ENCODE measurements at regions of chr5 and their contacts with region 1.

Region 1: GRCh38 chr5:127030259-127031146 is at the start of gene MARCHF3:
- DNase-seq: peak; percentile 91 to 98 (median 94)
- ATAC-seq: peak; percentile 98
- H3K4me3 ChIP-seq: peak within 1 kb of the TSS; percentile 79
- H3K4me3 Mint-ChIP-seq: peak within 1 kb of the TSS; percentile 83 to 96 (median 92)
- H3K27ac ChIP-seq: peak within 1 kb of the TSS; percentile 78
- H3K27ac Mint-ChIP-seq: peak within 1 kb of the TSS; percentile 42 to 93 (median 82)
- H3K4me1 ChIP-seq: peaks cover 0 to 10% of the 10 kb centered on the region in 2 donors
- H3K4me1 Mint-ChIP-seq: peaks cover 17 to 38% (median 28%) of the 10 kb centered on the region in 7 donors
- H3K27me3 ChIP-seq: no peaks in the 10 kb centered on the region
- H3K27me3 Mint-ChIP-seq: peaks cover 0 to 56% (median 0%) of the 10 kb centered on the region in 5 donors
- total RNA-seq, gene MARCHF3: 3.1 to 15.4 (median 13.0) TPM

Region 2: DNA sequence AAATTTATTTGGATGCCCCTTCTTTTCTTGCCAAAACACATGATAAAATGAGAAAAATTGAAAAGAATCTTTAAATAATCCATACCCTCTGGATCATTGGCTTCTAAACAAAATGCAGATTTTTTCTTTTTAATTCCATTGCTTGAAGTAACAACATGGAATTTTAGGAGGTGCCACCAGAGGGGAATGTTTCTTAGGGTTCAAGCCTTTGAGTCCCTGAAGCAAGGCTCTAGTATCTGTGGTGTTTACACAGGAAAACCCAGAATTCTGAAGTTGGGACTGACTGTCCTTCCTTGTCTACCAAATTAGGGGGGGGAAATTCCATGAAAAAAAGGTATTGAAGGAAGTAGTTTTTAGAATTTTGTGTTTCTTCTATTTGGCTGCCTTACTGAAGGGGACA is 184.2 kb before region 1 on chr5:
- CTCF ChIA-PET with region 1: no interaction called
- POLR2A ChIA-PET with region 1: interaction called, 17 read pairs
- intact Hi-C with region 1: loop called in 1 of 2 experiments (anchors 1 kb)
- DNase-seq: no peak
- ATAC-seq: no peak
- H3K4me3 ChIP-seq: peak overlapping the region; percentile 27
- H3K4me3 Mint-ChIP-seq: peak overlapping the region in 7 of 10 donors; percentile 42 to 73 (median 59)
- H3K27ac ChIP-seq: peak overlapping the region; percentile 66
- H3K27ac Mint-ChIP-seq: peak overlapping the region; percentile 27 to 98 (median 94)
- H3K4me1 ChIP-seq: peaks cover 3 to 23% of the 10 kb centered on the region in 2 donors
- H3K4me1 Mint-ChIP-seq: peaks cover 18 to 61% (median 51%) of the 10 kb centered on the region in 7 donors
- H3K27me3 ChIP-seq: no peaks in the 10 kb centered on the region
- H3K27me3 Mint-ChIP-seq: no peaks in the 10 kb centered on the region

Region 3: DNA sequence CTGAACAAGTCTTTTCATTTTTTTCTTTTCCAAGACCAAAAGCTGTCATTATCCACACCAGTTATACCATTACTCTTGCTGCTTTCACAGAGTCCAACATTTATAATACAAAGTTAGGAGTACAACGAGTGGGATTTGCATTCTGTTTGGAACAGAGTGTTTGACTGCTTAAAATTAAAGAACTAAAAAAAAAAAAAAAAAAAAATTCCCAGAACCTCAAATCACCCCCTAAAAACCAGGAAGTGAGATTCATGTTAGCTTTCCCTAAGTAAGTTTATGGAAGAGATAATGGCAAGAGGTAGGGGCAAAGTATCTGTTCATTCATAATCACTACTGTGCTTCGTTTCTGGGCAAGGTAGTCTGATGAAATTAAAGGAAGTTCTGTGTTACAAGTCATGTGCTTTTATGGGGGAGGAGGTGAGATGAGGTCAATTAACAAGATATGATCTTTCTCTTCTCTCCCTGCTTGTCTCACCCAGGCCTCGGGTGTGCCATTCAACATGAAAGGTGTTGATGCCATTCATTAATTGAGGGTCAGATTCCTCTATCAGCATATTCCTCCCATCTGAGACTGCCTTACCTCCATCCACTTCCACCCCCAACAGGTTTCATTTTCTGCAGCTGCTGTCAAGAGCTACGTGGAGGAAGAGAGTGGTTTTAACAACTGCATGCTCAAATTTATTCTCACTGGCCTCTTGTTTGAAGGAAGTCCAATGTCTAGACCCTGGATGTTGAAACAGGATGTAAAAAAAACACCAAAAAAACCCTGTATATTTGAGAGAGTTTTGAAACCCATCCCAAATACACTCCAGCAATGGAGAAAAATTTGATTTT is 58.2 kb before region 1 on chr5:
- CTCF ChIA-PET with region 1: no interaction called
- POLR2A ChIA-PET with region 1: interaction called, 4 read pairs
- intact Hi-C with region 1: loop called (anchors 1 kb)
- DNase-seq: peak in 7 of 9 donors; percentile 12 to 44 (median 32)
- ATAC-seq: peak; percentile 80
- H3K4me3 ChIP-seq: peak overlapping the region; percentile 34
- H3K4me3 Mint-ChIP-seq: peak overlapping the region; percentile 62 to 93 (median 86)
- H3K27ac ChIP-seq: peak overlapping the region; percentile 53
- H3K27ac Mint-ChIP-seq: peak overlapping the region; percentile 79 to 97 (median 87)
- H3K4me1 ChIP-seq: peaks cover 7 to 21% of the 10 kb centered on the region in 2 donors
- H3K4me1 Mint-ChIP-seq: peaks cover 24 to 56% (median 38%) of the 10 kb centered on the region in 7 donors
- H3K27me3 ChIP-seq: no peaks in the 10 kb centered on the region
- H3K27me3 Mint-ChIP-seq: no peaks in the 10 kb centered on the region

Region 4: GRCh38 chr5:127011961-127012644 is 18.4 kb before region 1 on chr5:
- CTCF ChIA-PET with region 1: no interaction called
- POLR2A ChIA-PET with region 1: interaction called, 4 read pairs
- intact Hi-C with region 1: loop called in 1 of 2 experiments (anchors 2 kb)
- DNase-seq: no peak
- ATAC-seq: no peak
- H3K4me3 ChIP-seq: no peak overlapping the region
- H3K4me3 Mint-ChIP-seq: no peak overlapping the region
- H3K27ac ChIP-seq: no peak overlapping the region
- H3K27ac Mint-ChIP-seq: peak overlapping the region in 1 of 9 donors; percentile 53
- H3K4me1 ChIP-seq: peaks cover 0 to 18% of the 10 kb centered on the region in 2 donors
- H3K4me1 Mint-ChIP-seq: peaks cover 5 to 47% (median 31%) of the 10 kb centered on the region in 7 donors
- H3K27me3 ChIP-seq: no peaks in the 10 kb centered on the region
- H3K27me3 Mint-ChIP-seq: peaks cover 0 to 3% (median 0%) of the 10 kb centered on the region in 5 donors

Region 5: GRCh38 chr5:127229185-127229889 is 198.8 kb after region 1 on chr5:
- CTCF ChIA-PET with region 1: no interaction called
- POLR2A ChIA-PET with region 1: no interaction called
- intact Hi-C with region 1: loop called (anchors 1 kb)
- DNase-seq: peak; percentile 28 to 68 (median 64)
- ATAC-seq: peak; percentile 83
- H3K4me3 ChIP-seq: peak overlapping the region; percentile 66
- H3K4me3 Mint-ChIP-seq: peak overlapping the region; percentile 73 to 88 (median 80)
- H3K27ac ChIP-seq: peak overlapping the region; percentile 62
- H3K27ac Mint-ChIP-seq: peak overlapping the region; percentile 36 to 88 (median 84)
- H3K4me1 ChIP-seq: peaks cover 0 to 15% of the 10 kb centered on the region in 2 donors
- H3K4me1 Mint-ChIP-seq: peaks cover 7 to 28% (median 18%) of the 10 kb centered on the region in 7 donors
- H3K27me3 ChIP-seq: no peaks in the 10 kb centered on the region
- H3K27me3 Mint-ChIP-seq: peaks cover 0 to 5% (median 0%) of the 10 kb centered on the region in 5 donors

Region 6: GRCh38 chr5:127358740-127359139 is 328.2 kb after region 1 on chr5:
- CTCF ChIA-PET with region 1: no interaction called
- POLR2A ChIA-PET with region 1: no interaction called
- intact Hi-C with region 1: no loop called
- DNase-seq: no peak
- ATAC-seq: no peak
- H3K4me3 ChIP-seq: no peak overlapping the region
- H3K4me3 Mint-ChIP-seq: no peak overlapping the region
- H3K27ac ChIP-seq: no peak overlapping the region
- H3K27ac Mint-ChIP-seq: no peak overlapping the region
- H3K4me1 ChIP-seq: no peaks in the 10 kb centered on the region
- H3K4me1 Mint-ChIP-seq: no peaks in the 10 kb centered on the region
- H3K27me3 ChIP-seq: no peaks in the 10 kb centered on the region
- H3K27me3 Mint-ChIP-seq: peaks cover 15 to 30% (median 22%) of the 10 kb centered on the region in 5 donors

Region 7: DNA sequence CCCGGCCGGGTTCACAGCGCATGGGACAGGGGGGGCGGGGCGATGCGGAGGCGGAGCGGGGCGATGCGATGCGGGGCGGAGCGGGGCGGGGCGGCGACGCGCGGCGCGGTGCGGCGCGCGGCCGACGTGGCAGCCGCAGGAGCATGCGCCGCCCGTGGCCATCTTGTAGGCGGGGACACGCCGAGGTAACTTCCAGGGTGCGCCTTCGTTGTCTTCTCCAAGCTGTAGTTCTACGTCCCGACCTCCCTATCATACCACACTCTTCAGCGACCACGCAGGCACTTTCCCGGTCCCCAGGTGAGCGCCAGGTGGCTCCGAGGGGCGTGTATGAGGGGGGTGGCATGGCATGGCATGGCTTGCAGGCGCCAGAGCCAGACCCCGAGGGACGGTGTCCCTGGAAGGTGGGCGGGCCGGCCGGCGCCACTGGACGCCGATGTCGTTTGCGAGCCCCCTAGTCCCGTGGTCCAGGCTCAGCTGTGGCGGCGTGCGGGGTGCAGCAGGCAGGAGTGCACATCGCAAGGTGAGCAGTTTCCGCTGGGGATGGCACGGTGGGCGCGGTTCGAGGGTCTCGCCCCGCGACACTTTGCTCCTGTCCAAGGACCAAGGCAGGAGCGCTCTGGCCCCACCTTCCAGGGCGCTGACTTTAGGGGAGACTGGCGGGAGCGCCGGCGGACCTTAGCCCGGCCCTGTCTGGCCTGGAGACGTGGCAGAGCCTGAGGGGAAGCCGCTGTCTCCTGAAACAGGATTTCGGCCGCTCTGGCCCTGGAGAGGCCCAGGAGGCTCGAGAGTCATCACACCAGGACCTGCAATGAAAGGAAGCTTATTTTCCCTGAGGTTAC is 487.2 kb after region 1 on chr5 and contains the start of gene PRRC1:
- CTCF ChIA-PET with region 1: no interaction called
- POLR2A ChIA-PET with region 1: no interaction called
- intact Hi-C with region 1: loop called (anchors 1 to 5 kb)
- DNase-seq: peak; percentile 63 to 80 (median 74)
- ATAC-seq: peak; percentile 99
- H3K4me3 ChIP-seq: peak within 1 kb of the TSS; percentile 94
- H3K4me3 Mint-ChIP-seq: peak within 1 kb of the TSS; percentile 87 to 92 (median 89)
- H3K27ac ChIP-seq: peak within 1 kb of the TSS; percentile 89
- H3K27ac Mint-ChIP-seq: peak within 1 kb of the TSS; percentile 48 to 91 (median 82)
- H3K4me1 ChIP-seq: peaks cover 0 to 18% of the 10 kb centered on the region in 2 donors
- H3K4me1 Mint-ChIP-seq: peaks cover 25 to 48% (median 38%) of the 10 kb centered on the region in 7 donors
- H3K27me3 ChIP-seq: no peaks in the 10 kb centered on the region
- H3K27me3 Mint-ChIP-seq: peaks cover under 1 to 7% (median 6%) of the 10 kb centered on the region in 5 donors
- total RNA-seq, gene PRRC1: 34.6 to 56.6 (median 49.4) TPM